ENCODE measurements at regions of chr6 and their contacts with region 1.

Region 1: DNA sequence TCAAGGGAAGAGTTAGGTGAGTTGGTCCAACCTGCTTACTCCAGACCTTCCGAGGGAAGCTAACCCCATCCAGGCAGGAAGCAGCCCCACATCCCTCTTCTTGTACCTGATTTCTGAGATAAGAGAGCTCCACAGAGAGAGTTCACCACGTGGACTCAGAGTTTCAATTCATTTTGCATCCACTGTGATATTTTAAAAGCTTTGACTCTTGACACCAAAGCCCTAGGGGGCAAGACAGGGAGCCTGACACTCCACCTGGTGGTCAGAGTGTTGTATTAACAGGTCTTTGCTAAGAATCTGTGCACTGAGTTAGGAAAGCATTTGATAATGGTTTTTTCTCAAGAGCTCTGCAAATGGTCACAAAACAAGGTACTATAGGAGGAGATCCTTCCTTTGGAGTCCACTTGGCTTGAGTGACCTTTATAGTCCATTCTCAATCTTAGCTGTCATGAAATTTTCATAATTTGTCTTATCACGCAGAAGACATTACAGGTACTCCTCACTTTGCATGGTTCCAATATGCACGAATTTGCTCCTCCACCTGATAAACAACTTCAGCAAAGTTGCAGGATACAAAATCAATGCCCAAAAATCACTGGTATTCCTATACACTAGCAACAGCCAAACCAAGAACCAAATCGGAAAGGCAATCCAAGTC is 56.2 kb upstream of the RIPOR2 start:
- DNase-seq: peak; percentile 52
- H3K4me3 ChIP-seq: no peak overlapping the region
- H3K27ac ChIP-seq: no peak overlapping the region
- H3K4me1 ChIP-seq: no peaks in the 10 kb centered on the region
- H3K27me3 ChIP-seq: no peaks in the 10 kb centered on the region
- CTCF ChIP-seq: peak; percentile 72

Region 2: DNA sequence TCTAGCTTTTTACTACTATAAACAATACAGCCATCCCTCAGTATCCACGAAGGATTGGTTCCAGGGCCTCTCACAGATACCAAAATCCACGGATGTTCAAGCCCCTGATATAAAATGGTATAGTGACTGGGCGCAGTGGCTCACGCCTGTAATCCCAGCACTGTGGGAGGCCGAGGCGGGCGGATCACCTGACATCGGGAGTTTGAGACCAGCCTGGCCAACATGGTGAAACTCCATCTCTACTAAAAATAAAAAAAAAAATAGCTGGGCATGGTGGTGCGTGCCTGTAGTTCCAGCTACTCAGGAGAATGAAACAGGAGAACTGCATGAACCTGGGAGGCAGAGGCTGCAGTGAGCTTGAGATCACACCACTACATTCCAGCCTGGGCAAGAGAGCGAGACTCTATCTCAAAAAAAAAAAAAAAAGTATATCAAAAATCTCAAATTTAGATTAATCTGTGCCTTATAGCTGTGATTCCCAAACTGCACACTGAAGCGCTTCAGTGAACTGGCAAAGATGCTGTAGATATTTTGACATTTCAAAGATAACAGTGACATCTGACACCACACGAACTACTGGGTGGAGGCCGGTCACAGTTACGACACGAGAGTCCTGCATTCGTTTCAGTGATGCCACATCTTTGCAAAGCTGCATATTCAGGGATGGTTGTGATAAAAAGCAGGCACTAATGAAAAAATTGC is 550.9 kb before region 1 on chr6:
- intact Hi-C with region 1: no loop called
- DNase-seq: no peak
- H3K4me3 ChIP-seq: no peak overlapping the region
- H3K27ac ChIP-seq: no peak overlapping the region
- H3K4me1 ChIP-seq: no peaks in the 10 kb centered on the region
- H3K27me3 ChIP-seq: no peaks in the 10 kb centered on the region
- CTCF ChIP-seq: no peak

Region 3: DNA sequence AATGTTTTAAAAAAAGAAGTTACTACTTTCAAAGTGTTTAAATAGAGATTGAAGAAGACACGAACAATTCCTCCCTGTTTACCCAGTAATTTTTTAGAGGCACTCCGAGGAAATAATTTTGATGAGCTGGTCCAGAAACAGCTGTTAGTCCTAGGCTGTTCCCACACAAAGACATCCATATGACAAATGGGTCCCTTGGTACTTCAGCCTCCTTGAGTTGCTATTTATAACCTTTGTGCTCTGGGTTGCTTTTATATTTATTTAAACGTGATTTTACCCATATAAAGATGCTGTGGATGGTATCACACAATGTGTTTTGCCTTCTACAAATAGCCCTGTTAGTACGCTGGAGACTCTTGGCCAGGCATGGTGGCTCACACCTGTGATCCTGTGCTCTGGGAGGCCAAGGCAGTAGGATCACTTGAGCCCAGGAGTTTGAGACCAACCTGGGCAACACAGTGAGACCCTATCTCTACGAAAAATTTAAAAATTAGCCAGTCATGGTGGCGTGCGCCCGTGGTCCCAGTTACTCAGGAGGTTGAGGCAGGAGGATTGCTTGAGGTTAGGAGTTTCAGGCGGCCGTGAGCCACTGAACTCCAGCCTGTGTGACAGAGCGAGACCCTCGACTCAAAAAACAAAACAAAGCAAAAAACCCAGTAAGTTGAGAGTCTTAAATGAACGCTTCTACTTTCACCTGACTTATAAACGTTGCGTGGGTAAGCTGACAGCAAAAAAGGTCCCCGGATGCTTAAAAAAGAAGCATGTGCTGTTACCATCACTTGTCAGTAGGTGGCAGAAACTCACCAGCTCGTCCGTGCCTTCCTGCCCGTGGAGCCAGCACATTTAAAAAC is 136.3 kb before region 1 on chr6:
- intact Hi-C with region 1: loop called (anchors 2 kb)
- DNase-seq: peak; percentile 57
- H3K4me3 ChIP-seq: no peak overlapping the region
- H3K27ac ChIP-seq: no peak overlapping the region
- H3K4me1 ChIP-seq: peaks cover 6% of the 10 kb centered on the region
- H3K27me3 ChIP-seq: no peaks in the 10 kb centered on the region
- CTCF ChIP-seq: peak; percentile 91

Region 4: GRCh38 chr6:24933868-24934401 is 58.0 kb before region 1 on chr6:
- intact Hi-C with region 1: loop called (anchors 10 kb)
- DNase-seq: peak; percentile 39
- H3K4me3 ChIP-seq: no peak overlapping the region
- H3K27ac ChIP-seq: no peak overlapping the region
- H3K4me1 ChIP-seq: no peaks in the 10 kb centered on the region
- H3K27me3 ChIP-seq: no peaks in the 10 kb centered on the region
- CTCF ChIP-seq: peak; percentile 71

Measured in colonic mucosa (tissue), 4 donors.